ENCODE measurements at regions of chr18 and their contacts with region 1.

Region 1: GRCh38 chr18:36624451-36625167 is 204.2 kb downstream of the TPGS2 start:
- DNase-seq: no peak
- H3K4me3 ChIP-seq: no peak overlapping the region
- H3K27ac ChIP-seq: no peak overlapping the region
- H3K4me1 ChIP-seq: no peaks in the 10 kb centered on the region
- H3K27me3 ChIP-seq: no peaks in the 10 kb centered on the region
- CTCF ChIP-seq: peak in 2 of 3 experiments; percentile 34 to 53; a peak in 2 of 4 replicates
- EP300 ChIP-seq: no peak
- POLR2A ChIP-seq: no peak
- RAD21 ChIP-seq: peak; percentile 29 to 48

Region 2: GRCh38 chr18:36372903-36373311 is 251.7 kb before region 1 on chr18:
- CTCF ChIA-PET with region 1: no interaction called
- POLR2A ChIA-PET with region 1: no interaction called
- DNase-seq: no peak
- H3K4me3 ChIP-seq: no peak overlapping the region
- H3K27ac ChIP-seq: no peak overlapping the region
- H3K4me1 ChIP-seq: no peaks in the 10 kb centered on the region; a peak in 1 of 7 replicates
- H3K27me3 ChIP-seq: no peaks in the 10 kb centered on the region
- CTCF ChIP-seq: peak; percentile 6 to 28 (median 22); a peak in 3 of 4 replicates
- EP300 ChIP-seq: no peak
- POLR2A ChIP-seq: no peak
- RAD21 ChIP-seq: peak; percentile 31 to 53; a peak in 3 of 4 replicates

Region 3: GRCh38 chr18:36601316-36601715 is 23.3 kb before region 1 on chr18:
- CTCF ChIA-PET with region 1: interaction called, 11 read pairs
- POLR2A ChIA-PET with region 1: no interaction called
- DNase-seq: no peak
- H3K4me3 ChIP-seq: no peak overlapping the region
- H3K27ac ChIP-seq: no peak overlapping the region
- H3K4me1 ChIP-seq: peaks cover 0 to 3% (median 0%) of the 10 kb centered on the region in 4 experiments; a peak in 3 of 7 replicates
- H3K27me3 ChIP-seq: no peaks in the 10 kb centered on the region
- CTCF ChIP-seq: no peak
- EP300 ChIP-seq: no peak
- POLR2A ChIP-seq: no peak
- RAD21 ChIP-seq: no peak

Region 4: DNA sequence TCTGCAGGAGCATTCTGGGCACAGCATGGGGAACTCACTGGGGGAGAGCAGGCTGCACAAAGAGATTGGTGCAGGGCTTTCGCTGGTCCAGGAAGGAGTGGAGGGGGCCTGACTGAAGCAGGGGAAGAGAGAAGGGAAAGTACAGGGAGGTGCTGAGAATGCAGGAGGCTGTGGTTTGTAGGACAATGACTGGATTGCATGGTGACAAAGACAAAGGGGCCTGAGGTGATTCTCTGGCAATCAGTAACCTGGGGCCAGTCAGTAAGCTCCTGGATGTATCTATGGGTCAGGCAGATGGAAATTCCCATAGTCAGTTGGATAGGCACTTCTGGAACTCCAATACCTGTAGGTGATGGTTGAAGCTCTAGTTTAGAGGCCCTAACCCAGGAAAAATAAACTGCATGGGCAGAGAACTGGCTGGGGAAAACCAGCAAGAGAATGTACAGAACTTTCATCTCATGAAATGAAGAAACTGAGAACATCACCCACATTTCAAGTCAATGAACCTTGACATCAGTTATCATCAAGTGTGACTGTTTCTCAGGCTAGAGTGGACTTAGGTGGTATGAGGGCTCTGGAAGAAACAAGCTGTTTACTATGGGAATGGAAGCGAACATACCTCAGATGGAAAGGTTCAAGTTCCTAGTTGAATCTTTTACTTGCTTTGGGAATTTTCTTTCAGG is 10.9 kb after region 1 on chr18:
- CTCF ChIA-PET with region 1: interaction called, 11 read pairs
- POLR2A ChIA-PET with region 1: no interaction called
- DNase-seq: no peak
- H3K4me3 ChIP-seq: no peak overlapping the region
- H3K27ac ChIP-seq: no peak overlapping the region
- H3K4me1 ChIP-seq: peaks cover 2 to 12% (median 9%) of the 10 kb centered on the region in 4 experiments; a peak in 6 of 7 replicates
- H3K27me3 ChIP-seq: no peaks in the 10 kb centered on the region
- CTCF ChIP-seq: no peak
- EP300 ChIP-seq: no peak
- POLR2A ChIP-seq: no peak
- RAD21 ChIP-seq: no peak